Activated CD8-positive, alpha-beta T cell treated with anti-CD3 and anti-CD28 coated beads for 36 hours (primary cell): ENCODE measurements at regions of chr21 and their contacts with region 1.

Region 1: DNA sequence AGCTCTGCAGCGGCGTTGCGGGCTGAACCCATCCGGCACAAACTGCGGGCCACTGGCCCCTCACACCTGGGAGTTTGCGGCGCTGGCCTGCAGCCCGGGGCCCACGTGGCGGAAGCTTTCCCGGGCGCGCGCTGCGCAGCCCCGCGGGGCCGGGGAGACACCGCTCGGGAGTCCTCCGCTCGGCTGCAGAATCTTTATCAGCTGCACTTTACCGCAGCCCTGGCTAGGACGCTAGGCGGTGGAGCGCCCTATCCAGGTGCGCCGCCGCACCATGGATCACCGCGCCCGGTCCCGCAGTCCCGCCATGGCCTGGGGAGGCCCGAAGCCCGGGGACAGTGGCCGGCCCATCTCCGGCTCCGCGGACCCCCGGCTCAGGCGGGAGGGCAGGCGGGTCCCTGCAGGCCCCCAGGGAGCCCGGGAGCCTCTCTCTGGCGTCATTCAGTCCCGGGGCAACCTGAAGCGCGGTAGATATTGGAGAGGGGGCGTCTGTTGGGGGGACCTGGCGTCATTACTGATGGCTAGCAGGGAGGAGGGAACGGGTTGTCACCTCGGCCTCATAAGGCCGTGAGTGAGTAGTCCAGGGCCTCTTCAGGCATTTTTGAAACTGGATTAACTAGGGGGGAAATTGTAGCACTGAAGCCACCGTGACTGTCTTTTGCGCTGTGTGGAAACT is 5.7 kb upstream of the OLIG2 start:
- DNase-seq: peak; percentile 37
- ATAC-seq: peak; percentile 68
- H3K4me3 Mint-ChIP-seq: peak overlapping the region; percentile 37
- H3K27ac Mint-ChIP-seq: no peak overlapping the region
- H3K4me1 Mint-ChIP-seq: peaks cover 24% of the 10 kb centered on the region
- H3K27me3 Mint-ChIP-seq: peaks cover 75% of the 10 kb centered on the region
- CTCF ChIP-seq: no peak

Region 2: DNA sequence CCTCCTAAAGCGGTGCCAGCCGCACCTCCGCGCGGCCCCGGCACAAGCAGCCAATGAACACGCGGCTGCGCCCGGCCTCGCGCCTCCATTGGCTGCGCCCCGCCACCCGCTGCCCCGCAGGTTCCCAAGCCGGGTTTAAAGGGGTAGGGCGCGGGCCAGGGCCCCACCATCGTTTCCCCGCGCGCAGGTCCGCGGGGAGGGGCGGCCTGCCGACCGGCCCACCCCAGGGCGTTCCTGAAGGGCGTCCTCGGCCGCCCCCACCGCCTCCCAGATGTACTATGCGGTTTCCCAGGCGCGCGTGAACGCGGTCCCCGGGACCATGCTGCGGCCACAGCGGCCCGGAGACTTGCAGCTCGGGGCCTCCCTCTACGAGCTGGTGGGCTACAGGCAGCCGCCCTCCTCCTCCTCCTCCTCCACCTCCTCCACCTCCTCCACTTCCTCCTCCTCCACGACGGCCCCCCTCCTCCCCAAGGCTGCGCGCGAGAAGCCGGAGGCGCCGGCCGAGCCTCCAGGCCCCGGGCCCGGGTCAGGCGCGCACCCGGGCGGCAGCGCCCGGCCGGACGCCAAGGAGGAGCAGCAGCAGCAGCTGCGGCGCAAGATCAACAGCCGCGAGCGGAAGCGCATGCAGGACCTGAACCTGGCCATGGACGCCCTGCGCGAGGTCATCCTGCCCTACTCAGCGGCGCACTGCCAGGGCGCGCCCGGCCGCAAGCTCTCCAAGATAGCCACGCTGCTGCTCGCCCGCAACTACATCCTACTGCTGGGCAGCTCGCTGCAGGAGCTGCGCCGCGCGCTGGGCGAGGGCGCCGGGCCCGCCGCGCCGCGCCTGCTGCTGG is 50.2 kb after region 1 on chr21 and contains the start of gene OLIG1:
- CTCF ChIA-PET with region 1: no interaction called
- POLR2A ChIA-PET with region 1: no interaction called
- intact Hi-C with region 1: loop called (anchors 5 kb)
- DNase-seq: peak; percentile 48
- ATAC-seq: peak; percentile 74
- H3K4me3 Mint-ChIP-seq: peak within 1 kb of the TSS; percentile 65
- H3K27ac Mint-ChIP-seq: no peak within 1 kb of the TSS
- H3K4me1 Mint-ChIP-seq: peaks cover 9% of the 10 kb centered on the region
- H3K27me3 Mint-ChIP-seq: peaks cover 66% of the 10 kb centered on the region
- CTCF ChIP-seq: no peak
- total RNA-seq, gene OLIG1: 0.61 TPM in 1 of 2 experiments, not detected in the other